Activated CD8-positive, alpha-beta T cell treated with anti-CD3 and anti-CD28 coated beads for 36 hours (primary cell): ENCODE measurements at regions of chr13 and their contacts with region 1.

Region 1: GRCh38 chr13:77480066-77480465 is 55.4 kb upstream of the SCEL start:
- DNase-seq: no peak
- ATAC-seq: no peak
- H3K4me3 Mint-ChIP-seq: no peak overlapping the region
- H3K27ac Mint-ChIP-seq: no peak overlapping the region
- H3K4me1 Mint-ChIP-seq: peaks cover 18% of the 10 kb centered on the region
- H3K27me3 Mint-ChIP-seq: no peaks in the 10 kb centered on the region
- CTCF ChIP-seq: no peak

Region 2: DNA sequence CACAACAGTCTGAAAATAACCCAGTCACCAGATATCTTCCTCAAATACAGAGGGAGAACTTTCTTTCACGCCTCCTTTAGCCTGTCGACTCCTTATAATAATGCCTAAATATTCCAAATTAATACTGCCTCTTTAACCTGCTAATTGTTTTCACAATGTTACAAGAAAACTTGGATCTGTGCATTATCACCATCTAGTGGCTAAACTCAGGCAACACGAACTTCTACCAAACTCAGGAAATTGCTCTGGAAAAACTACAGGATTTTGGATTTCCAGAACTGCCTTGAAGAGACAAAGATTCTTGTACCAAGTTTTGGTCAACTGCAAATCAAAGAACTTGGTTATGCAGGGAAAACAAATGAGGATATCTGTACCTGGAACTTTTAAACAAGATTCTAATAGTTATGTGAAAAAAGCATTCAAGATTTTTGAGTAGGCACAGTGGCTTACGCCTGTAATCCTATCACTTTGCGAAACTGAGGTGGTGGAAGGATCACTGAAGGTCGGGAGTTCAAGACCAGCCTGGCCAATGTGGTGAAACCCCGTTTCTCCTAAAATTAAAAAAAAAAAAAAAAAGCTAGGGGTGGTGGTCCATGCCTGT is 477.4 kb before region 1 on chr13:
- CTCF ChIA-PET with region 1: no interaction called
- POLR2A ChIA-PET with region 1: no interaction called
- intact Hi-C with region 1: loop called (anchors 10 kb)
- DNase-seq: no peak
- ATAC-seq: no peak
- H3K4me3 Mint-ChIP-seq: no peak overlapping the region
- H3K27ac Mint-ChIP-seq: no peak overlapping the region
- H3K4me1 Mint-ChIP-seq: peaks cover 34% of the 10 kb centered on the region
- H3K27me3 Mint-ChIP-seq: no peaks in the 10 kb centered on the region
- CTCF ChIP-seq: peak; percentile 58

Region 3: GRCh38 chr13:77190349-77190958 is 289.6 kb before region 1 on chr13:
- CTCF ChIA-PET with region 1: interaction called, 12 read pairs
- POLR2A ChIA-PET with region 1: no interaction called
- intact Hi-C with region 1: no loop called
- DNase-seq: no peak
- ATAC-seq: no peak
- H3K4me3 Mint-ChIP-seq: no peak overlapping the region
- H3K27ac Mint-ChIP-seq: no peak overlapping the region
- H3K4me1 Mint-ChIP-seq: peaks cover 5% of the 10 kb centered on the region
- H3K27me3 Mint-ChIP-seq: no peaks in the 10 kb centered on the region
- CTCF ChIP-seq: no peak

Region 4: DNA sequence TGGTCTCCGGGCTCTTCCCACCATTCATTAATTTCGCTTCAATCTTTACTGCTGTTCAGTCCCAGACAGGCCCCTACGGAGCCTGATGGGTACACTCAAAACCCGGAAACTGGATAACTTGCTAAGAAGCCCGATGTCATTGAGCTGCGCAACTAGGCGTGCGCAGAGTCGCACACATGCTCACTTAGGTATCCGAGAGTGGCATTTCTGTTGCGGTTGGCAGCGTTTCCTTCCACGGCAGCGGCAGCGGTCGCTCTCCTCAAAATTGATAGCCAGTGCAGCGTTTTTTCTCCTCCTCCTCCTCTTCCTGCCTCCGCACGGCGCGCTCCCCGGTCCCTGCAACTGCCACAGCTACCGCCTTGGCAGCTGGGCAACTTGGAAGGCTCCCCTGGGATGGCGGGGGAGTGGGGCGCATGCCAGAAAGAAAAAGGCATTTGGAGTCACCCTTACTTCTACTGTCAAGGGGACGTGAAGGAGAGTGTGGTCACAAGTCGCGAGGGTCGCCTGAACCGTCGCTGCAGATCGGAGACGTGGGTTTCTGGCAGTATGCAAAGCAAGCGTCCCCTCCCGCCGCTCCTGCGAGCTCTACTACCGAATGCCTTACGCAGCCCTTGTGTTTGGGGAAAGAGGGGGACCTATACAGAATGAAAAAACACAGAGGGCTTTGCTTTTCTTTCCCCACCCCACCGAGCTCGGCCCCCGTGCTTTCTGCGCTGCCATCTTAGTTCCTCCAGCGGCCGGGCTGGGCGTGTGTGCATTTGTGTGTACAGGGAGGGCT is 150.7 kb before region 1 on chr13:
- CTCF ChIA-PET with region 1: interaction called, 85 read pairs
- POLR2A ChIA-PET with region 1: interaction called, 14 read pairs
- intact Hi-C with region 1: loop called (anchors 1 kb)
- DNase-seq: peak; percentile 97
- ATAC-seq: peak; percentile 70
- H3K4me3 Mint-ChIP-seq: peak overlapping the region; percentile 81
- H3K27ac Mint-ChIP-seq: peak overlapping the region; percentile 95
- H3K4me1 Mint-ChIP-seq: peaks cover 29% of the 10 kb centered on the region
- H3K27me3 Mint-ChIP-seq: peaks cover 1% of the 10 kb centered on the region
- CTCF ChIP-seq: no peak

Region 5: GRCh38 chr13:77443511-77443910 is 36.6 kb before region 1 on chr13:
- CTCF ChIA-PET with region 1: interaction called, 14 read pairs
- POLR2A ChIA-PET with region 1: no interaction called
- intact Hi-C with region 1: no loop called
- DNase-seq: no peak
- ATAC-seq: no peak
- H3K4me3 Mint-ChIP-seq: no peak overlapping the region
- H3K27ac Mint-ChIP-seq: no peak overlapping the region
- H3K4me1 Mint-ChIP-seq: no peaks in the 10 kb centered on the region
- H3K27me3 Mint-ChIP-seq: peaks cover 10% of the 10 kb centered on the region
- CTCF ChIP-seq: no peak

Region 6: GRCh38 chr13:77503398-77503797 is 23.3 kb after region 1 on chr13:
- CTCF ChIA-PET with region 1: interaction called, 10 read pairs
- POLR2A ChIA-PET with region 1: no interaction called
- intact Hi-C with region 1: no loop called
- DNase-seq: no peak
- ATAC-seq: no peak
- H3K4me3 Mint-ChIP-seq: no peak overlapping the region
- H3K27ac Mint-ChIP-seq: no peak overlapping the region
- H3K4me1 Mint-ChIP-seq: no peaks in the 10 kb centered on the region
- H3K27me3 Mint-ChIP-seq: peaks cover 3% of the 10 kb centered on the region
- CTCF ChIP-seq: no peak

Region 7: GRCh38 chr13:77678691-77679267 is 198.7 kb after region 1 on chr13:
- CTCF ChIA-PET with region 1: no interaction called
- POLR2A ChIA-PET with region 1: no interaction called
- intact Hi-C with region 1: no loop called
- DNase-seq: no peak
- ATAC-seq: no peak
- H3K4me3 Mint-ChIP-seq: no peak overlapping the region
- H3K27ac Mint-ChIP-seq: no peak overlapping the region
- H3K4me1 Mint-ChIP-seq: no peaks in the 10 kb centered on the region
- H3K27me3 Mint-ChIP-seq: peaks cover 19% of the 10 kb centered on the region
- CTCF ChIP-seq: no peak